ENCODE measurements at regions of chr20 and their contacts with region 1.

Region 1: GRCh38 chr20:32357869-32358631 is at the start of gene ASXL1:
- DNase-seq: peak; percentile 100
- H3K4me3 Mint-ChIP-seq: peak within 1 kb of the TSS; percentile 88
- H3K27ac Mint-ChIP-seq: peak within 1 kb of the TSS; percentile 93
- H3K4me1 Mint-ChIP-seq: peaks cover 49% of the 10 kb centered on the region
- H3K27me3 Mint-ChIP-seq: no peaks in the 10 kb centered on the region
- CTCF ChIP-seq: no peak
- total RNA-seq, gene ASXL1: 120 and 123 TPM in 2 replicates

Region 2: GRCh38 chr20:32325706-32326503 is 32.1 kb before region 1 on chr20:
- CTCF ChIA-PET with region 1: interaction called, 3 read pairs
- intact Hi-C with region 1: loop called (anchors 2 kb)
- DNase-seq: peak; percentile 60
- H3K4me3 Mint-ChIP-seq: no peak overlapping the region
- H3K27ac Mint-ChIP-seq: peak overlapping the region; percentile 83
- H3K4me1 Mint-ChIP-seq: peaks cover 20% of the 10 kb centered on the region
- H3K27me3 Mint-ChIP-seq: no peaks in the 10 kb centered on the region
- CTCF ChIP-seq: no peak

Region 3: DNA sequence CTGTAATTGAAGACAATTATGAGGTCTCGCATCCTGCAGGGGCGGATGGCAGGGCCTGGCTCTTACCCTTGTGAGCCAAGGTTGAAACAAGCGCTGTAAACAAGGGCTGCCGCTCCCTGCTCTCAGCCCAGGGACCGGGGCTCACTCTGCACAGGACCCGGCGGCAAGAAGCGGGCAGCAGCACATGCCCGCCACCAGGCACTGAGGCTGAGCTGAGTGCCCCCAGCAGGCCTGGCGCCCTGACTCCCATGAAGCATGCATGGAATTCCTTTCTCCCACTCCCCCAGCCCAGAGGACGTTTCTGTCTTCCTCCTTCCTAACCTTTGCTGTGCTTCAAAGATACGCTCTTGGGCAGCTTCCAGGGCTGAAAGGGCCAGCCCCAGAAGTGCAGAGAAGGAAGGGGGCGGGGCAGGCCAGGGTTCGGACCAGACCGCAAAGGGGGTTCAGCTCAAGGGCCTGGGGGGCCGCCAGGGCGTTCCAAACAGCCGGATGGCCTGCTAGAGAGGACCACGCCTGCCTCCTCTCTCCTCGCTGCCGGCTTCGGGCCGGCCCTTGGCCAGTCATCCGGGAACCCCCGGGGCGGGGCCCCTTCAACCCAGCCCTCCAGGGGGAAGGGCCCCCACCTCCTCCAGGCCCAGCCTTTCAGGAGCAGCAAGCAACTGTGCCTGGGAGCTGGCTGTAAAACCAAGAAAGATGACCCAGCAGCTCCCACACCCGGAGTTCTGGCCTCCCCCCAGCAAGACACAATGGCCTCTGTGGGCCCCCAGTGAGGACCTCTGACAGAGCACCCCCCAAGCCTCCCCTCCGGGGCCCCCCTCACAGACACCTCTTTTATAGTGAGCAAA is 117.1 kb after region 1 on chr20:
- CTCF ChIA-PET with region 1: no interaction called
- intact Hi-C with region 1: loop called (anchors 5 kb)
- DNase-seq: peak; percentile 100
- H3K4me3 Mint-ChIP-seq: peak overlapping the region; percentile 79
- H3K27ac Mint-ChIP-seq: peak overlapping the region; percentile 72
- H3K4me1 Mint-ChIP-seq: peaks cover 78% of the 10 kb centered on the region
- H3K27me3 Mint-ChIP-seq: no peaks in the 10 kb centered on the region
- CTCF ChIP-seq: no peak